ENCODE measurements at regions of chr1 and their contacts with region 1.

Region 1: GRCh38 chr1:9900142-9901043 is 9.7 kb downstream of the CTNNBIP1 start:
- DNase-seq: peak; percentile 78
- ATAC-seq: peak; percentile 95
- H3K4me3 ChIP-seq: peak overlapping the region in 4 of 5 experiments; percentile 29 to 46 (median 40)
- H3K4me3 Mint-ChIP-seq: peak overlapping the region; percentile 89
- H3K27ac ChIP-seq: peak overlapping the region; percentile 38 to 39
- H3K27ac Mint-ChIP-seq: peak overlapping the region; percentile 92
- H3K4me1 ChIP-seq: peaks cover 12 to 16% of the 10 kb centered on the region in 2 donors
- H3K4me1 Mint-ChIP-seq: peaks cover 16% of the 10 kb centered on the region
- H3K27me3 ChIP-seq: no peaks in the 10 kb centered on the region
- H3K27me3 Mint-ChIP-seq: no peaks in the 10 kb centered on the region
- CTCF ChIP-seq: no peak

Region 2: GRCh38 chr1:10309243-10310011 is 409.0 kb after region 1 on chr1:
- CTCF ChIA-PET with region 1: no interaction called
- POLR2A ChIA-PET with region 1: interaction called, 13 read pairs
- intact Hi-C with region 1: no loop called
- DNase-seq: no peak
- ATAC-seq: no peak
- H3K4me3 ChIP-seq: no peak overlapping the region
- H3K4me3 Mint-ChIP-seq: no peak overlapping the region
- H3K27ac ChIP-seq: no peak overlapping the region
- H3K27ac Mint-ChIP-seq: no peak overlapping the region
- H3K4me1 ChIP-seq: no peaks in the 10 kb centered on the region
- H3K4me1 Mint-ChIP-seq: no peaks in the 10 kb centered on the region
- H3K27me3 ChIP-seq: no peaks in the 10 kb centered on the region
- H3K27me3 Mint-ChIP-seq: no peaks in the 10 kb centered on the region
- CTCF ChIP-seq: no peak